ENCODE measurements at regions of chr14 and their contacts with region 1.

Region 1: GRCh38 chr14:93788543-93789227 is 400 bp upstream of the PRIMA1 start:
- DNase-seq: peak; percentile 24 to 81 (median 52)
- H3K4me3 ChIP-seq: peak overlapping the region; percentile 35 to 82 (median 67)
- H3K27ac ChIP-seq: peak overlapping the region in 58 of 59 donors; percentile 41 to 96 (median 88)
- H3K27me3 ChIP-seq: peaks cover 0 to 54% (median 12%) of the 10 kb centered on the region in 45 donors
- CTCF ChIP-seq: peak; percentile 30 to 81 (median 60)

Region 2: GRCh38 chr14:93655078-93655750 is 133.5 kb before region 1 on chr14:
- intact Hi-C with region 1: loop called (anchors 1 to 2 kb)
- DNase-seq: peak in 2 of 10 donors; percentile 22 to 45
- H3K4me3 ChIP-seq: peak overlapping the region in 7 of 59 donors; percentile 1 to 35 (median 14)
- H3K27ac ChIP-seq: peak overlapping the region in 11 of 59 donors; percentile 1 to 61 (median 32)
- H3K27me3 ChIP-seq: no peaks in the 10 kb centered on the region
- CTCF ChIP-seq: peak; percentile 45 to 91 (median 76)

Region 3: GRCh38 chr14:93736378-93737014 is 52.2 kb before region 1 on chr14:
- intact Hi-C with region 1: loop called in 1 of 2 experiments (anchors 10 kb)
- DNase-seq: no peak
- H3K4me3 ChIP-seq: no peak overlapping the region
- H3K27ac ChIP-seq: peak overlapping the region in 10 of 59 donors; percentile 3 to 93 (median 34)
- H3K27me3 ChIP-seq: peaks cover 0 to 7% (median 0%) of the 10 kb centered on the region in 45 donors
- CTCF ChIP-seq: peak in 3 of 56 donors; percentile 6 to 29 (median 11)

Region 4: DNA sequence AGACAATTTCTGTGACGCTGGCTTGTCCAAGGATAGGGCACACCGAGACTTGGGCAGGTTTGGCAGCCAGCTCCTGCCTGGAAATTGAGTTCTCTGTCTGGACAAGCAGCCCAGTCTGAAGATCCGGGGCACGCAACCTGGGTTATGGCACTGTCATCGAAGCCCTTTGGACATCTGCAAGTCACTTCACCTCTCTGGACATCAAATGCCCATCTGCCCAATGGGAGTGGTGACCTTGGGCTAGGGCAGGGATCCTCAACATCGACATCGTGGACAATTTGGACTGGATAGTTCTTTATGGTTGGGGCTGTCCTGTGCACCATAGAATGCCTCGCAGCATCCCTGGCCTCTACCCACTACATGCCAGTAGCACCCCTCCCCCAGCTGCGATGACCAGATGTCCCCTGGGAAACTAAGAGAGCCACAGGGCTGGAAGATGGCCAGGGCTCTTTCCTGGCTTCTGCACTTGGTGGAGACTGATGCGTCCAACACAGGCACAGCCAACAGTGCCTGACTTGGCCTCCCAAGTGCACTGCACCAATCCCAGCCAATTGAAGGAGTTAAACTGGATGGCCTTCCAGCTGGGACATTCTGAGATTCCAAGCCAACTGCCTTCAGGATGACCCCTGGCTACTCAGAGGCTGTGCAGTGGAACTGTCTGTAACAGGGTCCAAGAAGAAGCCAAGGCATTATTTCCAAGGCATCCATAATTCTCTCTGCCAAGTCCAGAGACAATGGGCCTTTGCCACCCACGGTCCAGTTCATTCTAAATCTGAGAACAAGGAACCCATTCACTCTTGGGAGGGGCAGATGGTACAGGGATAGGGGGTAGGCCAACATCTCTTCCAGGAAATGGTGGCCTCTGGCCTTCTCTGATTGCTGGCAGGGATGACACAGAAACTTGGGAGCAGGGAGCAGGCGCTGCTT is 35.8 kb before region 1 on chr14:
- intact Hi-C with region 1: loop called (anchors 1 to 2 kb)
- DNase-seq: peak; percentile 32 to 95 (median 88)
- H3K4me3 ChIP-seq: peak overlapping the region in 2 of 59 donors; percentile 0 to 16
- H3K27ac ChIP-seq: peak overlapping the region; percentile 56 to 98 (median 91)
- H3K27me3 ChIP-seq: no peaks in the 10 kb centered on the region
- CTCF ChIP-seq: peak in 3 of 56 donors; percentile 2 to 10 (median 8)

Region 5: DNA sequence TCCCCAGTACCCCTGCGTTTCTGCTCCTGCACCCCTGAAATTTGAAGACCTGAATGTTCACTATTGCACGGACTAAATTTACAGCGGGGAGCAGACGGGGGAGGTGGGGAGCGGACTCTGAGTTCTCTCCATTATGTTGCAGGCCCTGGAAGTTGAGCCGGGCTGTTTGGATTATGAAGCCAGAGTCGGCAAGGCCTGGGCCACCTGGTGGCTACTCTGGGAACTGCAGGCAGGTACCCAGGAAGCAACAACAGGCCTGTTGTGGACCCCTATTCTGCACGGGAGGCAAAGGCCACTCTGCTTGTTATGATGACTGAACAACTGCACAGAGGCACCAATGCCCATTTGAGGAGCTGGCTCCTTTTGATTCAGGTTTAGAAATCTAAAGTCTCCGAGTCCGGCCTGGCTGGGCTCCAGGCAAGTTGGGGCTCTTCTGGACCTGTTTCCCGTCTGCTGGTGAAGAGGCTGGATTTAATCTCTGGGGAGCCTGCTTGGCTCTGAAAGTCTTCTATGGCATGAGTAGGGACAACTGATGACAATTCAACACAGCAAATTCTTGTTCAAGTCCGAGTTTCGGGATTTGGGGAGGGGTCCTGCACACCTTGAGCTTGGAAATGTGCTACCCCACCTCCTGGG is 104.4 kb after region 1 on chr14:
- intact Hi-C with region 1: loop called (anchors 2 to 5 kb)
- DNase-seq: peak; percentile 59 to 85 (median 78)
- H3K4me3 ChIP-seq: peak overlapping the region in 1 of 59 donors; percentile 6
- H3K27ac ChIP-seq: no peak overlapping the region
- H3K27me3 ChIP-seq: peaks cover 0 to 17% (median 0%) of the 10 kb centered on the region in 45 donors
- CTCF ChIP-seq: peak; percentile 87 to 99 (median 98)